Right ventricle myocardium inferior (tissue), 1 donor: ENCODE measurements at regions of chr14 and their contacts with region 1.

Region 1: DNA sequence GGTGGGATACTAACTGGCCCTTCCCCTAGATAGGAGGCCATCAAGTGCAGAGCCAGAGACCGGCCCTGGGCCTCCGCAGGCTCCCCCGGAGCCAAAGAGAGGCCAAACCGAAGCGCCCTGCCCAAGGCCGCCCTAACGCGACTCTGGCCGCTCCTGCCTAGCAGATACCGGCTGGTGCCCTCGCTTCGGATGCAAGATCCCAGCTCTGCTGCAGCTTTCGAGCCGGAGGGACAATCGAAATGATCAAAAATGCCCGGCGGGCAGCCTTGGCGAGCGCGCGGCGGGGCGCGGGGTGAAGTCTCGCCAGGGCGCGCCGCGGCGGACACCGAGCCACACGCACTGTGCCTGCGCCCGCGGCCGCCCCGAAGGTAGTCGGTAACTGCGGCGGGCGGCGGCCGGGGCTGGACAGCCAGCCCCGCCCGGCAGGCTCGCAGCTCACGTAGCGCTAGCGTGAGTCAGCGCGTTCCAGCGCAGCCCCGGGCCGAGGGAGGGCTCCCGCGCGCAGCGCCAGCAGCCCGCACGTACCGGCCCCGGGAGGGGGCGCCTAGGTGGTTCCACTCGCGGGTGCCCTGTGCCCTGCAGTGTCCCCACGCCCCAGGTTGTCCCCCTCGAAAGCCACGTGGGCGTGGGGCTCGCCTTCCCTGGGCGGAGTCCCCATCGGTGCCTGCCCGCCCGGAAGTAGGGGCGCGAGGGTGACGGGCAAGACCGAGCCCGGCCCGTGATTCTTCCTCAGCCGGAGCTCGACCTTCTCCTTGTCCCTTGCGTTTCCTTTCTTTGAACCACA is 109.2 kb upstream of the EGLN3 start:
- DNase-seq: peak; percentile 89
- ATAC-seq: peak; percentile 94

Region 2: DNA sequence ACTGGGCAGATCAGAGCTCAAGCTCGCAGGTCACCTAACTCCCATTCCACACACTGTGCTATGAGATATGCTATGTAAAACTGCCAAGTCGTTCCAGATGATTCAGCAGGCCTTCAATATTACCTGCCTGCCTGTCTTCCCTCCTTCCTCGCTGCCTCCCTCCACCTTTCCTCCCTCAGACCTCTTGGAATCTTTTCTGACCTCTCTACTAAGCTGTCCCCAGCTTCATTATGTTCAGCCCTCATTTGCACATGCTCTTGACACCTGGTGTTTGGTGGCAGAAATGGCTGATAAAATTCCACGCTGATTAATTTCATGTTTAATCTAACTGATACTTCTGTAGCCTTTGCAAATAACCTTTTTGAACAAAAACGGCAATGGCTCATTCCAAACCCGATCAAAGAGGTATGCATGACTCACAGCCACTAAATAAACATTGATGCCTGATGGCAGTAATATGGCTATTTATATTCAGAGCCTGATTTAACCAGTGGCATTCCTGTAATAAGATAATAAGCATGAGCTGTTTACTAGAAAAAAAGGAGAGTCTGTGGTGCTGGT is 21.6 kb after region 1 on chr14:
- intact Hi-C with region 1: loop called (anchors 1 kb)
- DNase-seq: no peak
- ATAC-seq: peak; percentile 66